GM13976 (cell line): ENCODE measurements at regions of chr14 and their contacts with region 1.

Region 1: DNA sequence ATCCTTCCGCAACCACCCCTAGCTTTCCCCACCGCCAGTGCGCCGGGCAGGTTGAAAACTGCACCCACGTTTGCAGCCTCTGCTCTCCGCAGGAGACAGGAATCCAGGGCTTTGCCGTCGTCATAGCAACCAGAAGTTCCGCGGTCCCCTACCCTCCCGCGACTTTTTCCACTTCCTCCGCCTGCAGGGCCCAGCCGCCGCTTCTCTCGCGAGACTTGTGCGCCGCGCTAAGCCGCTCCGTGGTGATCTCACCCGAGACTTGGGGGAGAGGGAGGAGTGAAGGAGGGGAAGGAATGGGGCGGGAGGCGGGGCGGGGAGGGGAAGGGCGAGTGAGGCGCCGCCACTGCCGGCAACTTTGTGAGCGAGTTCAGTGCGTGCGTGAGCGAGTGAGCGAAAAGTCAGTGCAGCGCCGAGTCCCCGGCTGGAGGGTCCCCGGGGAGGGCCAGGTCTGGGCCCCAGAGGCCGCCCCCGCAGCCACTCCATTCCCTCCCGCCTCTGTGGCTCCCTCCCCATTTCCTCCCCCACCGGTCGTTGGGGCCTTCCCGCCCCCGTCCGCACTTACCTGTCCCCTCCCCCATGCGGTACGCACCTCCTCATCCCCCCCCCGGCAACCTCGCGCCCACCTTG is 413.0 kb downstream of the PCNX1 start:
- DNase-seq: peak; percentile 95
- CTCF ChIP-seq: no peak

Region 2: DNA sequence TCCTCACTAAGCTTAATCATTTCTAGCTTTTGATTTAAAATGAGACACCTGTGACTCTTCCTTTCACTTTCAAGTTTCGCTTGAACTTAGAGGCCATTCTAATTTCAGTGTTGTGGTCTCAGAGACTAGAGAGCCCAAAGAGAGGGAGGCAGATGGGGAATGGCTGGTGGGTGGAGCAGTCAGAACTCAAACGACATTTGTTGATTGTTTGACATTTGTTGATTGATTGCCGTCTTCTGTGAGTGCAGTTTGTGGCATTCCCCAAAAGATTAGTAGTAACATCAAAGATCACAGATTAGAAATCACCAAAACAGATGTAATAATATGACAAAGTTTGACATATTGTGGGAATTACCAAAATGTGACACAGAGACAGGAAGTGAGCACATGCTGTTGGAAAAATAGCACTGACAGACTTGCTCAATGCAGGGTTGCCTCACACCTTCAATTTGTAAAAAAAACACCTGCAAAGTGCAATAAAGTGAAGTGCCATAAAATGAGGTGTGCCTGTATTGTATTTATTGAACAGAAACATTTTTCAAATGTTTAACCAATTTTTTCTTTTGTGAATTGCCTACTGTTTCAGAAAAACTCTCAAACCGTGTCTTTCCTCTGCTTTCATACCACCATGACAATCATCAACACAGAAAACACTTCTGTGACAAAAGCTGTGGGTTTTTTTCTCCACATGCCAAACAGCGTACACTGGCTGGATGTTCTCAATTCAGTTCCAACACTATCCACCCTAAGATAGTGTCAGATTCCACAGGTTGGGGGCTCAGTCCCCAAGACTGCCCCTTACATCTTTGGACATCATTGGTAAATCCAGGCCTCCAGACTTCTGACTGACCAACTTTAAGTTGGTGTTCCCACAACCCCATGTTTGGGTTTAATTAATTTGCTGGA is 235.7 kb after region 1 on chr14:
- in situ Hi-C with region 1: loop called (anchors 10 kb)
- DNase-seq: peak; percentile 47
- CTCF ChIP-seq: no peak

Region 3: GRCh38 chr14:71753126-71753830 is 433.1 kb after region 1 on chr14:
- in situ Hi-C with region 1: loop called (anchors 10 kb)
- DNase-seq: peak; percentile 86
- CTCF ChIP-seq: peak; percentile 92